Right ventricle myocardium inferior (tissue), 1 donor: ENCODE measurements at regions of chr1 and their contacts with region 1.

Region 1: DNA sequence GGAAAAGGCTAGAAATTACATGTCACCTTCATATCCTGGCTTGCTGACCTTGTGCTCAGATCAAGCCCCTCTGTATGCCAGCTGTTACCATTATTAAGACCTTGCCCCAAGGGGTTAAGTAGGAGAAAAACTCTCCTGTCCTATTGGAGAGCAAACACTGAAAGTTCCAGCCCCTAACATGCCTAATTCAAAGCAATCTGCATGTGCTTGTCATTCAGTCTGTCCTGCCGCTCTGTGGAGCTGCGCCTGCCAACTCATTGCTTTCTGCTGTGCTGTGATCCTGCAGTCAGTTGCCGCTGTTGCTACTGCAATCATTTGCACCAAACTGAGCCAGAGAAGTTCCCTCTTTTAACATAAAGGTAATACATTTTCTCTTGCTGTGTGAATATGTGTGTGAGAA is 113.4 kb downstream of the DISP1 start:
- DNase-seq: peak; percentile 77
- ATAC-seq: peak; percentile 96

Region 2: GRCh38 chr1:222814536-222815439 is 113.4 kb before region 1 on chr1 and contains the start of gene DISP1:
- intact Hi-C with region 1: loop called (anchors 10 kb)
- DNase-seq: peak; percentile 91
- ATAC-seq: peak; percentile 97
- total RNA-seq, gene DISP1: 7.2 TPM

Region 3: DNA sequence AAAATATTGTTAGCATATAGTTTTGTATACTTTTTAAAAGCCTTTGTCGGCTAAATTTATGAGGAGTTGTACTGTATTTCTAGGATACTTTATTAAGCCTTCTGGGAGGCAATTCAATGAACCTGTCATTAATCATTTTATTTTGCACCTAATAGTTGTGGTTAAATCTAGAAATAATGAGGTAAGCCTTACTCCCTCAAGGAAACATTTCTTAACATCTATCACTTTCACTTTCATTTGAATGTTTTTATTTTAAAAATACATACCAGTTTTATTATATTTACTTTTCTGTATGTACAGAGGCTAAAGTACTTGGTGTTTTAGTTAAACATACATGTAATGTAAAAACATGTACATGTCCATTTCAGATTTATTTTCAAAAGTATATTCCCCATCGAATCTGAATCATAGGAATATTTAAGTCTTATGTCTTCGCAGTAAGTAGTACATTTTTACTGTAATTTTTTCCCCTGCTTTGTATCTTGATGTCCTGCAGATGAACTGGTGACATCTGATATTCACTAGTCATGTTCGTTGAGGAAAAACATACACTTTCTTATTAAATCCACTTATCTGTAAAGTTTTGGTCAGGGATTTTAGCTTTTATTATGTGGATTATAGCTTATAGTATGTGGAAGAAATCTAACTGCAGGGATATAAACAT is 30.6 kb before region 1 on chr1:
- intact Hi-C with region 1: loop called (anchors 5 kb)
- DNase-seq: no peak
- ATAC-seq: no peak

Region 4: GRCh38 chr1:223074445-223075300 is 146.5 kb after region 1 on chr1:
- intact Hi-C with region 1: loop called (anchors 2 kb)
- DNase-seq: no peak
- ATAC-seq: peak; percentile 51